Tibial artery (tissue), 4 donors: ENCODE measurements at regions of chr11 and their contacts with region 1.

Region 1: GRCh38 chr11:57597916-57598830 is 688 bp downstream of the SERPING1 start:
- DNase-seq: peak; percentile 82 to 94
- H3K4me3 ChIP-seq: peak overlapping the region; percentile 71 to 82
- H3K27ac ChIP-seq: peak overlapping the region; percentile 97 to 98
- H3K4me1 ChIP-seq: peaks cover 0 to 28% (median 17%) of the 10 kb centered on the region in 4 donors
- H3K27me3 ChIP-seq: no peaks in the 10 kb centered on the region
- CTCF ChIP-seq: no peak

Region 2: GRCh38 chr11:57567515-57568329 is 30.5 kb before region 1 on chr11 and contains the start of gene UBE2L6:
- intact Hi-C with region 1: loop called (anchors 2 kb)
- DNase-seq: peak; percentile 33 to 71
- H3K4me3 ChIP-seq: peak within 1 kb of the TSS; percentile 72 to 83
- H3K27ac ChIP-seq: peak within 1 kb of the TSS; percentile 67 to 79
- H3K4me1 ChIP-seq: peaks cover 0 to 20% (median 11%) of the 10 kb centered on the region in 4 donors
- H3K27me3 ChIP-seq: no peaks in the 10 kb centered on the region
- CTCF ChIP-seq: peak in 1 of 2 experiments; percentile 91

Region 3: DNA sequence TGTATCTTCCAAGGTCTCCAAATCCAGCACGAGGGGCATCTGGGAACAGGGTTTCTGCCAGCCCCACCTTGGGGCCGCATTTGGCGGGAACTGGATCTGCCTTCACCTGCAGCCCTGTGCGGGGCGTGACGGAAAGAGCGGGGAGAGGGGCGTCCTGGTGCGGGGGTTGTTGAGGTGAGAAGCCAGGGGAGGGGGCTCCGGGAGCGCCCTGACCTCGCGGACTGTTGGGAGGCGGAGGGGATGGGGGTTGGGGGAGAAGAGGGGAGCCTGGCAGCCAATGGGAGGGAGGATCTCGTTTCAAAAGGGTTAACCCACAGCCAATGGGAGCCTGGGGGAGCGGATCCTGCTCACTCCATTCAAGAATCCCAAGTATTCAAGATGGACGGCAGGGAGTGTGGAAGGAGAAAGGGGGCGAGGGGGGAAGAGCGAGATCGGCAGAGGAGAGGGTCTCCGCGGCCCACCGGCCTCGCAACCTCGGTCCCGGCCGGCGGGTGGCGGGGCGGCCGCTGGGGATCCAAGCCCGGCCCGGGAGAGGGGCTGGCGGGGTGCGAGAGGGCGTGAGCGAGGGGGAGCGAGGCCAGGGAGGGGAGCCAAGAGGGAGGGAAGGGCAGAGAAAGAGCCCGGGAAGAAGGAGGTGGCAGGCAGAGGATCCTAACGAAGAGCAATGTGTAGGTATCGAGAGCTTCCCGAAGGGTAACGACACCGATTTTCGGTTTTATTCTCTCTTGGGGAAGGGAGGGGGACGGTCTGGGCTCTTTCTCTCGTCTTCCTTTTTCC is 40.0 kb after region 1 on chr11:
- intact Hi-C with region 1: loop called (anchors 5 kb)
- DNase-seq: peak in 1 of 2 donors; percentile 69
- H3K4me3 ChIP-seq: peak overlapping the region; percentile 81 to 91
- H3K27ac ChIP-seq: peak overlapping the region; percentile 76
- H3K4me1 ChIP-seq: peaks cover 3 to 32% (median 26%) of the 10 kb centered on the region in 4 donors
- H3K27me3 ChIP-seq: no peaks in the 10 kb centered on the region
- CTCF ChIP-seq: no peak